ENCODE measurements at regions of chr17 and their contacts with region 1.

Region 1: GRCh38 chr17:44314869-44315661 is 6.7 kb downstream of the RUNDC3A start:
- DNase-seq: peak; percentile 59
- H3K4me3 ChIP-seq: peak overlapping the region; percentile 15 to 65 (median 55)
- H3K27ac ChIP-seq: no peak overlapping the region
- H3K4me1 ChIP-seq: peaks cover 7% of the 10 kb centered on the region
- H3K27me3 ChIP-seq: no peaks in the 10 kb centered on the region
- CTCF ChIP-seq: no peak

Region 2: DNA sequence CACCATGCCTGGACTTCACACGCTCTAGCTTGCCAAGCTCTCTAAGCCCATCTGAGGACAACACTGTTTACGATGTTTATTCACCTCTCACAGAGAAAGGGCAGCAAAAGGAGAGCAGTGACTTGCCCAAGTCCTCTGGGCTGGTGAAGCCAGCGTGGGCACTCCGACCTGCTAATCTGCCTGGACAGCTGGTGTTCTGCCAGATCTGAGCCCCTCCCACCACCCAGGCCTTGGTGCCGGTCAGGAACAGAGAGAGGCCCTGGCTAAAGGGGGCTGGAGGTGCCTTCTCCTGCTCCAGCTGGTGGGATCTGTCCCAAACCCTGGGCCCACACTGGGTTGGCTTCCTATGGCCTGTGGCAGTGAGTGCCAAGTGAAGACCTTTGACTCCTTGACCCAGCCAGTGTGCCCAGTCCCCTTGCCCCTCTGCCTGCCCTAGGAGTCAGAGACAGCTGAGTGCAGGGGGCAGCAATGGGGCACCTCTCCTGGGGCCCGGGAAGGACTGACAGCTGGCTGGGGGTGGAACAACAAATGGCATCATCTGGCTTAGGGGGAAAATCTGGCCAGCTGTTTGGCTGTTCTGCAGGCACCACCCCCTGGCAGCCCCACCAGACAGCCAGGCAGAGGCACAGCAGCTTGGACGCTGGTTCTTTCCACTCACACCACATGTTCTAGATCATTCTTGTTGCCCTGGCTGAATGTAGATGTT is 45.4 kb before region 1 on chr17:
- CTCF ChIA-PET with region 1: no interaction called
- dilution Hi-C with region 1: loop called (anchors 5 kb)
- in situ Hi-C with region 1: no loop called
- intact Hi-C with region 1: no loop called
- DNase-seq: no peak
- H3K4me3 ChIP-seq: no peak overlapping the region
- H3K27ac ChIP-seq: no peak overlapping the region
- H3K4me1 ChIP-seq: no peaks in the 10 kb centered on the region
- H3K27me3 ChIP-seq: no peaks in the 10 kb centered on the region
- CTCF ChIP-seq: no peak

Region 3: DNA sequence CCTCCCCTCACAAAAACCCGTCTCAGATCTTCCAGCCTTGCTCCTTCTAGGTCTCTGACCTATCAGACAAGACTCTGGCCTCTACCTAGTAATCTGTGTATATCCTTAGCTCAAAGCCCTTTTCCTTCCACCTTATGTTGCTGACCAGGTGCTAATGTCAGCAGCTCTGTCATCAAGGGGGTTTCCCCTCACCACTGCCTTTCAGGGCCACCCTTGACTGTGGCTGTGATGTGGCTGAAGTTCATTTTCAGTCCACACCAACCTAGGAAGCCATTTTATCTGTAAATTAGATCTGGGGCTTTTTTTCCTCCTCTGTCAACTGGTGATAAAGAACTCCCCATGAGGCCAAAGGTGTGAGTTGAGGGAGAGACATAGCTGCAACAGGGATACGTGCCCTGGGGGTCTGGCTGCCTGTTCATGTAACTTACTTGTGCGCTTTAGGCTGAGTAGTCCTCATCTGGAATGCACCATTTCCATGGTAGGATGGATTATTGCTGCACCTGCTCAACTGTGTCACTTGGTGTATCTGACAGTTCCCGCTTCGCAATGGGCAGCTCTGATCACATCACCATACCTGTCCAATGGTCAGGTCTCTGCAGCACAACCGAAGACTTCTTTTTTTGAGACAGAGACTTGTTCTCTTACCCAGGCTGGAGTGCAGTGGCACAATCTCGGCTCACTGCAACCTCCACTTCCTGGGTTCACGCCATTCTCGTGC is 21.4 kb before region 1 on chr17:
- CTCF ChIA-PET with region 1: interaction called, 10 read pairs
- dilution Hi-C with region 1: no loop called
- in situ Hi-C with region 1: no loop called
- intact Hi-C with region 1: no loop called
- DNase-seq: no peak
- H3K4me3 ChIP-seq: no peak overlapping the region
- H3K27ac ChIP-seq: no peak overlapping the region
- H3K4me1 ChIP-seq: peaks cover 12% of the 10 kb centered on the region
- H3K27me3 ChIP-seq: no peaks in the 10 kb centered on the region
- CTCF ChIP-seq: no peak